ENCODE measurements at regions of chr2 and their contacts with region 1.

Region 1: GRCh38 chr2:173151671-173152398 is 76.2 kb downstream of the MAP3K20 start:
- DNase-seq: no peak
- H3K4me3 Mint-ChIP-seq: no peak overlapping the region
- H3K27ac Mint-ChIP-seq: no peak overlapping the region
- H3K4me1 Mint-ChIP-seq: peaks cover 32% of the 10 kb centered on the region
- H3K27me3 Mint-ChIP-seq: peaks cover 16% of the 10 kb centered on the region

Region 2: DNA sequence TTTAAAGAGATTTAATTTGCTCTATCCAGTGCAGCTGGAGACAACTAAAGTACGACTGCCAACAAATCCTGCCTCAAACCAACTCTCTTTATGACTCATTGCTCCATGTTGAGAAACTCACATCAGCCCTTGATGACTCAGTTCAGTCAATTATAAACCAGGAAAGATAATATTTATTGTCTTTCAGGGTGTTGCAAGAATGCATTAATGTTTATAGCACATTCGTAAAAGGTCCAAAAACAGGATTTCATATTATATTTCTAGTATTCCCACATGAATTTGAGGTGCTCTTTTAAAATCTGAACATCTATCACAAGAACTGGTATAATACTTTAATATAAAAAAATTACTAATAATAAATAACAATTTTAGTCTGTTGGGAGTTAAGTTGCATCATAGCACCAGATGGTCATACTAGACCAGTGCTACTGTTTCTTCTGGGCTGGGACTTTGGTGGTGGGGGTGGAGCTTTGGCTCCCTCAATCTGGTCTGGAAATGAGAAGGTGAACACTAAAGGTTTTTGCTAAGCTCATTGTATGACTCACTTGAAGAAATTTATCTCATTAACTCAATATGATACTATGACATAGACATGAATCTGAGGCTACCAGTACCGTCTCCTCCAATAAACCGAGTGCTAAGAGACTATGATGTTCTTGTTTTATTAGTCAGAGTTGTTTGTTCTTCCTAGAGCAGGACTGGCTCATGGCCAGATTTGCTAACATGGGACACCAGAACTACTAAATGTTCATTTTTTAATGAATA is 102.8 kb before region 1 on chr2:
- CTCF ChIA-PET with region 1: no interaction called
- POLR2A ChIA-PET with region 1: interaction called, 3 read pairs
- intact Hi-C with region 1: loop called (anchors 1 kb)
- DNase-seq: peak; percentile 74
- H3K4me3 Mint-ChIP-seq: no peak overlapping the region
- H3K27ac Mint-ChIP-seq: no peak overlapping the region
- H3K4me1 Mint-ChIP-seq: peaks cover 15% of the 10 kb centered on the region
- H3K27me3 Mint-ChIP-seq: peaks cover 25% of the 10 kb centered on the region

Region 3: GRCh38 chr2:173101687-173102086 is 50.1 kb before region 1 on chr2:
- CTCF ChIA-PET with region 1: no interaction called
- POLR2A ChIA-PET with region 1: no interaction called
- intact Hi-C with region 1: loop called (anchors 5 kb)
- DNase-seq: no peak
- H3K4me3 Mint-ChIP-seq: no peak overlapping the region
- H3K27ac Mint-ChIP-seq: no peak overlapping the region
- H3K4me1 Mint-ChIP-seq: peaks cover 15% of the 10 kb centered on the region
- H3K27me3 Mint-ChIP-seq: no peaks in the 10 kb centered on the region

Region 4: DNA sequence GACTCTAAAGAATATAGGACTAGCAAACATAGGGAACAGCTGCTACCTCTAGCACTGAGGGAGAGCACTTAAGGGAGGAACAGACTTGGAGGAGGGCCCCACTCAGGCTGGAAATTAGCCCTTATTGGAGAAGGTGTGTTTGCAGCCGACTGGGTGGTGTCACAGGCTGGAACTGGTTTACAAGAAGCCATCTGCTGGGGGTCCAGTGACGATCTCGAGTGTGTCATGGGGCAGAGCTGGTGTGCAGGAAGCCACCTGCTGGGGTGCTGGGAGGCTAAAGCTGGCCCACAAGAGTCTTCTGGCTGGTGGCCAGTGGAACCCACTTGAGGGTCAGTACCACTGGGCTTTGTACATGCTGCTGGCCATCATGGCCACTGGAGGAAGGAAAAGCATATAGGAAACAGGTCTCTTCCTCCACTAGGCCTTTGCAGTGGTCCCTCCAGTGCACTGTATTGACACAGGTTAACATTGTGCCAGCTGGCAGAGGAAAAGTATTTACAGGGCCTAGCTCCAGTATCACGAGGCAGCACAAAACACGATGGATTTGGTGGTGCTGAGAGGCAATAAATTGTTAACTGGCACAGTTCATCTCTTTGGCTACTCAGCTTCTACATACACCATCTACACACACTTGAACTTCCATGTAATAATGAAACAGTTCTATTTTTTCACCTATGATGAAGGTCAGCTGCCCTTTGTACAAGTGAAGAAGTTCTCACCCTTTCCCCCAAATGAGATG is 32.6 kb before region 1 on chr2:
- CTCF ChIA-PET with region 1: no interaction called
- POLR2A ChIA-PET with region 1: no interaction called
- intact Hi-C with region 1: no loop called
- DNase-seq: no peak
- H3K4me3 Mint-ChIP-seq: no peak overlapping the region
- H3K27ac Mint-ChIP-seq: no peak overlapping the region
- H3K4me1 Mint-ChIP-seq: no peaks in the 10 kb centered on the region
- H3K27me3 Mint-ChIP-seq: peaks cover 11% of the 10 kb centered on the region

Region 5: GRCh38 chr2:173134703-173135102 is 17.1 kb before region 1 on chr2:
- CTCF ChIA-PET with region 1: no interaction called
- POLR2A ChIA-PET with region 1: interaction called, 12 read pairs
- intact Hi-C with region 1: loop called (anchors 1 kb)
- DNase-seq: peak; percentile 20
- H3K4me3 Mint-ChIP-seq: no peak overlapping the region
- H3K27ac Mint-ChIP-seq: no peak overlapping the region
- H3K4me1 Mint-ChIP-seq: peaks cover 41% of the 10 kb centered on the region
- H3K27me3 Mint-ChIP-seq: peaks cover 46% of the 10 kb centered on the region

Region 6: DNA sequence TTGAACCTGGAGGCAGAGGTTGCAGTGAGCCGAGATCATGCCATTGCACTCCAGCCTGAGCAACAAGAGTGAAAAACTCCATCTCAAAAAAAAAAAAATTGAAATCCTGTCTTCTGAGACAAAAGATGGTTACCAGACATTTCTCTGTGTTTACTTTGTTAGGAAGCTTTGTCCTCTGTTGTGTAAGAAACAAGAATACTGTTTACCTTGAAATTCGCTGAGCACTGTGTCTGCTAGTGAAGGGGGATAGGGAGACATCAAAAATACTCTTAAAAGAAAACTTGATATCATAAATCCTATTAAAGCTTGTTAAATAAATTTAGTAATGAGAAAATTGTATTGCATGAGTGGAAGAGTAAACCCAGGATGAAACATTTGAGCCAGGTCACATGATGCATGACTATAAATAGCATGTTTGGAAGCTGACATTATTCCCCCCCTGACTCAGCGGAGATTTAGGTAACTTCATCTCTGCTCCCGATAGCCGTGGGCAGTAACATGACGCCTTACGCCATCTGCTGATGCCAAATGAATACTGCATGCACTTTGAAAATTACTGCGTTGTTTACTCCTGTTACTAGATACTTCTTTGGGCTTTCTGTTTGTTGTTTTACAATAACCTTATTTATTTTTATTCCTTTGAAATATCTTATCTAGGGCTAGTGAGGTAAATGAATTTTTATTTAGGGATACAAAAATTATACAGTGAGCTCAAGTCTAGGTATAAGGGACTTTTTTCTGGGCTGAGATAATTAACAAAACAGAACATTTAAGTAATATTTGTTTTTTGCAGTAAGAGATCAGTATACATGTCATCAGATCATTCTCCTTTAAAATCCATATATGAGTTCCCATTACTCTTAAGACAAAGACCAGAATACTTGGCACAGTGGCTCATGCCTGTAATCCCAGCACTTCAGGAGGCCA is 58.7 kb after region 1 on chr2:
- CTCF ChIA-PET with region 1: interaction called, 7 read pairs
- POLR2A ChIA-PET with region 1: no interaction called
- intact Hi-C with region 1: loop called (anchors 1 kb)
- DNase-seq: peak; percentile 58
- H3K4me3 Mint-ChIP-seq: no peak overlapping the region
- H3K27ac Mint-ChIP-seq: no peak overlapping the region
- H3K4me1 Mint-ChIP-seq: no peaks in the 10 kb centered on the region
- H3K27me3 Mint-ChIP-seq: peaks cover 8% of the 10 kb centered on the region

Region 7: DNA sequence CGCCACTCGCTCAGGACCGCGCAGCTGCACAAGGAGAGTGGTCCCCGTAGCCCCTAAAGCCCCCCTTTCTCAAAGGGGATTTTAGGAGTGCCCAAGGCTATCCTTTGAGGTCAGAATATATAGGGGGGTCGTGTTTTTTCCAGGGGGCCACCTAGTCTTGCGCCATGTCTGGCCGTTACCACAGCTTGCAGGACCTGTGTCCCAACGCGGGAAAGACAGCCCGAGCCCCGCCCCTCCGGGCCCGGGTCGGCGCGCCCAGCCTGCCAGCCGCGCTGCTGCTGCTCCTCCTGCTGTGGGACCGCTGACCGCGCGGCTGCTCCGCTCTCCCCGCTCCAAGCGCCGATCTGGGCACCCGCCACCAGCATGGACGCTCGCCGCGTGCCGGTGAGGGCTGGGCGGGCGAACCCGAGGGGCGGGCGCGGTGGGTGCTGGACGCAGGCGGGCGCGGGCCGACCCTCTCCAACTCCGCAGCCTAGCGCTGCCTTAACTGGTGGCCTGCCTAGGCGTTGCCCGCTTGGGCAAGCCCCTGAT is 202.8 kb after region 1 on chr2 and contains the start of gene CDCA7:
- CTCF ChIA-PET with region 1: no interaction called
- POLR2A ChIA-PET with region 1: no interaction called
- intact Hi-C with region 1: loop called (anchors 1 kb)
- DNase-seq: peak; percentile 78
- H3K4me3 Mint-ChIP-seq: peak within 1 kb of the TSS; percentile 84
- H3K27ac Mint-ChIP-seq: peak within 1 kb of the TSS; percentile 93
- H3K4me1 Mint-ChIP-seq: peaks cover 41% of the 10 kb centered on the region
- H3K27me3 Mint-ChIP-seq: peaks cover 47% of the 10 kb centered on the region
- total RNA-seq, gene CDCA7: 59.9 to 64.1 TPM

Measured in activated CD4-positive, alpha-beta memory T cell treated with anti-CD3 and anti-CD28 coated beads for 36 hours (primary cell).